Activated CD4-positive, alpha-beta memory T cell treated with anti-CD3 and anti-CD28 coated beads for 36 hours (primary cell): ENCODE measurements at regions of chr7 and their contacts with region 1.

Region 1: GRCh38 chr7:26291699-26292538 is at the start of gene SNX10:
- DNase-seq: peak; percentile 76
- H3K4me3 Mint-ChIP-seq: peak within 1 kb of the TSS; percentile 93
- H3K27ac Mint-ChIP-seq: peak within 1 kb of the TSS; percentile 90
- H3K4me1 Mint-ChIP-seq: peaks cover 28% of the 10 kb centered on the region
- H3K27me3 Mint-ChIP-seq: no peaks in the 10 kb centered on the region
- total RNA-seq, gene SNX10: 43.1 to 44.1 TPM

Region 2: DNA sequence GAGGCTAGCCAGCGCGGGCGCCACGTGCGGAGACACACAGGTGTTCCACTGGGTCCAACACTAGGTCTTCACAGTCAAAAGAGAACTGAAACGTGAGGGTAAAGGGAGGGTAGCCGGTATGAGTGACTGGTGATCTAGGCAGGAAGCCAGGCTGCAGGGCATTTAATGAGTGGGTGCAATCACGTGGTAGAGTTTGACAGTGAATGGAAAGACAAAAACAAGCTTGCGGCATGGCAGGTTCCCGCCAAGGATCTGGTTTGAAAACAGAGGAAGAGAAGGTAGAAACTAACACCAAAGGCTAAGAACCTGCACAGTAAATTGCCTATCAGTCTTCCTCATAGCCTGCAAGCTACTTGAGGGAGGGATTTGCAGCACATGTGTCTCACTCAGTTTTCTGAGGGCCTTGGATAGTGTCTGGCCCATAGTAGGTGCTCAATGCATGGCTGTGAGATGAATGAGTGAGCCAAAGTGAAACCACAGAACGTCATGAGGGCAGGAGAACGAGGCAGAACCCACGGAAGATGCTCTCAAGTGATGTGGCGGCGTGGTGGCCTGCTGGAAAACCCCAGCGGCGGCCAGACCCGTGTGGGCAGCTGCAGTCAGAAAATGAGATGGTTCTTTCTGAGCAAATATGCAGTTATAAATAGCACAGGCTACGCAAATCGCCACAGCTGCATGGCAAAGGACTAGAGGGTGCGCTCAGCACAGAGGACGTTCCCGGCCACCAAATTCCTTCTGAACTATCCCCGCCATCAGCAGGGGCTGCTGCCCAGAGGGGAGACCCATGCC is 323.5 kb before region 1 on chr7:
- CTCF ChIA-PET with region 1: no interaction called
- POLR2A ChIA-PET with region 1: no interaction called
- intact Hi-C with region 1: loop called (anchors 1 kb)
- DNase-seq: peak; percentile 87
- H3K4me3 Mint-ChIP-seq: peak overlapping the region; percentile 7
- H3K27ac Mint-ChIP-seq: peak overlapping the region; percentile 55
- H3K4me1 Mint-ChIP-seq: peaks cover 23% of the 10 kb centered on the region
- H3K27me3 Mint-ChIP-seq: peaks cover 31% of the 10 kb centered on the region

Region 3: DNA sequence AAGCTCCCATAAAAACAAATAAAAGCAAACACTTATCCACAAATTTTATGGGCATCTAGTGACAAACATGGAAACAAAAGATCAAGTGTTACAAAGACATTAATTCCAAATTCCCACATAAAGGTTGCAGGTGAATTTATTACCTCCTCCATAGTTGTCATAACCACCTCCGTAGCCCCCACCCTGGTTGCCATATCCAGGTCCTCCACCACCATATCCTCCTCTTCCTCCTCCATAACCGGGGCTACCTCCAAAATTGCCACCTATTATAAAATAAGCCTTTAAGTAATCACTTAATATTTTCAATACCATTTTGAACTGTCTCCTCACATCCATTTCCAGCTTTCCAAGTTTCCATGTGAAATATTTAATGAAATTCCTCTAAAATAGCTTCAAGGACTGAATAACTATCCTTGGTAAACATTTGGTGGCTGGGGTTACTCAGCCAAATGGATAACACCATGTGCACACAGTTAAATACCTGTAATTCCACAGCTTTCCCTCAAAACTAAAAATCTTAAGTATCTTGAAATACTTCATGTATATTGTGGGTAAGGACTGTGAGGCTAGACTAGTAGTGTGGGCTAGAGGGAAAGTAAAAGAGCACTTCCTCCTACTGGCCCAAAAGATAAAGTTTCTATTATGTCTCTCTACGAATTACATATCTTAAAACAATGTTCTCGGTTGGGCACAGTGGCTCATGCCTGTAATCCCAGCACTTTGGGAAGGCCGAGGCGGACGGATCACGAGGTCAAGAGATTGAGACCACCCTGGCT is 98.3 kb before region 1 on chr7:
- CTCF ChIA-PET with region 1: interaction called, 8 read pairs
- POLR2A ChIA-PET with region 1: interaction called, 15 read pairs
- intact Hi-C with region 1: no loop called
- DNase-seq: no peak
- H3K4me3 Mint-ChIP-seq: peak overlapping the region; percentile 69
- H3K27ac Mint-ChIP-seq: peak overlapping the region; percentile 84
- H3K4me1 Mint-ChIP-seq: peaks cover 80% of the 10 kb centered on the region
- H3K27me3 Mint-ChIP-seq: no peaks in the 10 kb centered on the region

Region 4: DNA sequence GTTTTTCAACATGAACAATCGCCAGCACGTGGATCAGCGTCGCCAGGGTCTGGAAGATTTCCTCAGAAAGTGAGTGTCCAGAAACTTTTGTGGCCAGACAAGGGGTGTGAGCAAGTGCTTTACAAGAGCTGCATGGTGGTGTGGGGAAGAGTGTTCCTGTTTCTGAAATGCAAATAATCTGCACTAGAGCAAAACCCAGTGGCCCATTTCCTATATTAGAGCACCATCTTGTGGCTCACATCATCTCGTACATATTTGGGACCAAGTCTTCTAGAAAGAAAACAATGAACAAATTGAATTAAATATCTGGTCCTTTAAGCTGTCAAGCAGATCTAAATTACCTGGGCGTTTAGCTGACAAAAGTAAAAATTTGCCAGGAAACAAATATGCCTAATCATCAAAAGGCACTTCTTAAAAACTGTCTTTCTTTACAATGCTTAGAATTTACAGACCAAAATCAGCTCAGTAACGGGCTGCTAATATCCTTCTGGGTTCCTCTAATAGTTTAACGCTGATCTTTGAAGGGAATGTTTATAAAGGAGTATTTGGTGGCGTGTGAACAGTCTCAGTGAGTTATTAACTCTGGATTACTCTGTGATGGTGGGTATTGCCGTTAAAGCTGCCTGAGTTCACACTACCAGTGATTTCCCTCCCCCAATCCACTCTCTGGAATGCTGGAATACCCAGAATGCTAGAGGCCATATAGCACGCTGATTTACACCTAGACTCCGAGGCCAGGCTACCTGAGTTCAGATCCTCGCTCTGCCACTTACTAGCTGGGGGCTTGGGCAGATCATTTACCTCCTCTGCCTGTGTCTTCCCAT is 73.4 kb after region 1 on chr7:
- CTCF ChIA-PET with region 1: interaction called, 8 read pairs
- POLR2A ChIA-PET with region 1: no interaction called
- intact Hi-C with region 1: loop called (anchors 2 kb)
- DNase-seq: peak; percentile 51
- H3K4me3 Mint-ChIP-seq: no peak overlapping the region
- H3K27ac Mint-ChIP-seq: peak overlapping the region; percentile 31
- H3K4me1 Mint-ChIP-seq: peaks cover 12% of the 10 kb centered on the region
- H3K27me3 Mint-ChIP-seq: no peaks in the 10 kb centered on the region

Region 5: DNA sequence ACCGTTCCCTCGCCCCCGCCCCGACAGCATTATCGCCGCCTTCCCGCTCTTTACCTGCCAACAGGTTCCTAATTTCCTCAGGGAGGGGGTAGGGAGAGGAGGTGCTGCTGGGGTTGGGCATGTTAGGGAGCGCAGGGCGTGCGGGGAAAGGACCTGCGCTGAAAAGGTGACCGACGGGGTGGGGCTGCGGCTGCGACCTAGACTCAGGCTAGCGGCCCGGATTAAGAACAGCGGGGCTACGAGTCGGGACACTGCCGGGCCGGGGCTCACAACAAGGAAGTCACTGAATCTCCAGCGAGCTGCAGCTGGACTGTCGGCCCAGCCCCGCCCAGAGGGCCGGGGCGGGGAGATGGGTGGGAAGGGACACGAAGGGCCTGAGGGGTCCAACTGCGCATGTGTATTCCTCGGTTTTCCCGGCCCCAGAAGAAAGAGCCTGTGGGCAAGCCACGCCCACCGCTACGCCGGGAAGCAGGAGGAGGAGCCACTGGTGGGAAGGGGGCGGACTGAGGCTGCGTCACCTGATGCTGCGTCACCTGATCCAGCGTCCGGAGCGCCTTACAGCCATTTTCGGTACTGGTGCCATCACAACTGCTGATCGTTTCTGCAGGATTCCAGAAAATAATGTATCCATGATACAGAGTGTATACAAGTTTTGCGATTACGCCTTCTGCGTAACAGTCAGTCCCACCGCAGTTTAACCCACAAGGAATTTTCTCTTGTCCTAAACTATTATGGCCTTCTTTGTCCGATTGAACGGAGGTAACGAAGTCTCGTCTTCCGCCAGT is 572.6 kb after region 1 on chr7 and contains the start of gene SKAP2:
- CTCF ChIA-PET with region 1: no interaction called
- POLR2A ChIA-PET with region 1: no interaction called
- intact Hi-C with region 1: loop called (anchors 10 kb)
- DNase-seq: peak; percentile 94
- H3K4me3 Mint-ChIP-seq: peak within 1 kb of the TSS; percentile 95
- H3K27ac Mint-ChIP-seq: peak within 1 kb of the TSS; percentile 74
- H3K4me1 Mint-ChIP-seq: peaks cover 18% of the 10 kb centered on the region
- H3K27me3 Mint-ChIP-seq: peaks cover 27% of the 10 kb centered on the region
- total RNA-seq, gene SKAP2: 11.2 to 11.9 TPM